ENCODE measurements at regions of chr14 and their contacts with region 1.

Region 1: DNA sequence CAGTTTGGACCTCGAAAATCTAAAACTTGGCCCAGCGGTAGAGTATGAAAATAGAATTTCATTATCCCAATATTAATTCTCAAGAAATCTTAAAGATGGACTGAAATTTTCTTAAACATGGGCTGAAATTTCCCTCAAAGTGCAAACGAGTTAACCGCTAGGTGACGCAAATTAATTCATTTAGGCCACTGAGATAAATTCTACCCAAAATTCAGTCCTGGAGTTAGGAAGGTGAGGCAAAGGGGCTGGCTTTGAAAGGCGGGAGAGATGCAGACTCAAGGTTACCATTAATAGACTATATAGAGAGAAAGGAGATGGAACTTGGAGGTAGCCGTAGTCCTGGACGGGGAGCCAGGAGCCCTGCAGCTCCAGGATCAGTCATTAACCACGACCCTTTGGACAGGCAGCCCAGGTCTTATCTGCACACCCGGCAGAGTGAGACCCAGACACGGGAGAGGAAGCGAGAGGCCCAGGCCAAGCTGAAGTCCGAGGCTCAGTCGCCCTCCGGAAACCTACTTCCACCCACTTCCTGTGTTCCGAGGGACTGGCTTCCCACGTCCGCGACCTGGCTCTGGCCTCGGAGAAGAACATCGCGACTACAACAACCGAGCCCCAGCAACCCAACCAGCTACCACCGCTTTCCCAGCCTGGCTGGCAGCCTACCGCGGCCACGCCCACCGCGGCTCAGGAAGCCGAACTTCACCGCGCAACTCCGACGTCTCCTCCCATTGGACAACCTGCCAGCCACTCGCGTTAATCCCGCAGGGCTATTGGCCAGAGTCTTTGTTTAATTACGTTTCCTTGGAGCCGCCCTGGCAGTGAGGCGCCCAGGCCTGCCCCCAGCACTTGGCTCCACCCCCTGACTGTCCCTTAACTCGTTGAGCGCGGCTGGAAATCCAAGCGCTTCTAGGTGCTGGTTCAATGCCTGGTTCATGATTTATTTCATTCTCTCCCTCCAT is at the start of gene EFCAB11:
- DNase-seq: peak; percentile 96 to 98
- ATAC-seq: peak; percentile 89 to 94 (median 94)
- H3K4me3 ChIP-seq: peak within 1 kb of the TSS; percentile 91
- H3K27ac ChIP-seq: peak within 1 kb of the TSS; percentile 95
- H3K4me1 ChIP-seq: peaks cover 20% of the 10 kb centered on the region
- H3K27me3 ChIP-seq: no peaks in the 10 kb centered on the region
- CTCF ChIP-seq: no peak
- total RNA-seq, gene EFCAB11: 0.59 to 4.2 (median 1.5) TPM

Region 2: DNA sequence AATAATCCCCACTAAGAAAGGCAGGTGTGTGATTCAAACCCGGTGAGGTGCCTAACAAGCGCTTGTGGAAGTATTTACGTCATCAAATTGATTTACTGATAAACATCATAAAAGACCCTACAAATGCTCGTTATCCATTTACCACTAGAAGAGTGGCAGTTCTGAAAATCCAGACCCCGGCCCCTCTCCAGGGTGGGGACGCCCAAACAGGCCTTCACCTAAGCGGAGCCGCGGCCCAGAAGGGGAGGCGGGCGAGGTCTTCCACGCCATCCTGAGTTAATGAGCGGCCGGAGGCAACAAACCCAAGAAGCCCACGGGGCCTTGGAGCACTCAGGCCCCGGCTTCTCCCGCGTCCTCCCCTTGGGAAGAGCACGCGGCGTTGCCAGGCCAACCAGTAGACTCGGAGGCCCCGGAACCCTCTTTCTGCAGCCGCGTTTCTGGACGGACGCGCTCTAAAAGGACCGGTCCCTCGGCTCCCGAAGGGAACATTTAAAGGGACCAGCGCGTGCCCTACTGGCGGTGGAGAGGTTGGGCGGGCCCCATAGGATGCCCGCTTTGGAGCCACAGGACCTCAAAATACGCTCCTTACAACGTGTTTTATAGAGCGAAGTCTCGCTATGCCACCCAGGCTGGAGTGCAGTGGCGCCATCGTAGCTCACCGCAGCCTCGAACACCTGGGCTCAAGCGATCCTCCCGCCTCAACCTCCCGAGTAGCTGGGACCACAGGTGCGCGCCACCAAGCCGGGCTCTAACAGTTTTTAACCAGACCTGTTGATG is 1403.1 kb before region 1 on chr14:
- intact Hi-C with region 1: loop called in 1 of 2 experiments (anchors 10 kb)
- DNase-seq: peak; percentile 85 to 90
- ATAC-seq: peak; percentile 83 to 90 (median 87)
- H3K4me3 ChIP-seq: peak overlapping the region; percentile 91
- H3K27ac ChIP-seq: peak overlapping the region; percentile 88
- H3K4me1 ChIP-seq: peaks cover 37% of the 10 kb centered on the region
- H3K27me3 ChIP-seq: no peaks in the 10 kb centered on the region
- CTCF ChIP-seq: no peak

Region 3: GRCh38 chr14:89618811-89619551 is 335.4 kb before region 1 on chr14:
- intact Hi-C with region 1: no loop called
- DNase-seq: peak; percentile 81 to 88
- ATAC-seq: peak; percentile 85 to 90 (median 88)
- H3K4me3 ChIP-seq: peak overlapping the region; percentile 80
- H3K27ac ChIP-seq: peak overlapping the region; percentile 80
- H3K4me1 ChIP-seq: peaks cover 26% of the 10 kb centered on the region
- H3K27me3 ChIP-seq: no peaks in the 10 kb centered on the region
- CTCF ChIP-seq: no peak

Measured in psoas muscle (tissue), 8 donors.